ENCODE measurements at regions of chr6 and their contacts with region 1.

Region 1: GRCh38 chr6:126804332-126805064 is 314.0 kb upstream of the RSPO3 start:
- DNase-seq: peak; percentile 5
- H3K4me3 ChIP-seq: no peak overlapping the region
- H3K27ac ChIP-seq: no peak overlapping the region
- H3K4me1 ChIP-seq: no peaks in the 10 kb centered on the region
- H3K27me3 ChIP-seq: no peaks in the 10 kb centered on the region
- CTCF ChIP-seq: peak in 3 of 4 experiments; percentile 55 to 68 (median 65)
- POLR2A ChIP-seq: no peak

Region 2: GRCh38 chr6:126914801-126915200 is 110.3 kb after region 1 on chr6:
- intact Hi-C with region 1: no loop called
- DNase-seq: no peak
- H3K4me3 ChIP-seq: no peak overlapping the region
- H3K27ac ChIP-seq: no peak overlapping the region
- H3K4me1 ChIP-seq: no peaks in the 10 kb centered on the region
- H3K27me3 ChIP-seq: no peaks in the 10 kb centered on the region
- CTCF ChIP-seq: no peak
- POLR2A ChIP-seq: no peak

Region 3: GRCh38 chr6:127190552-127190951 is 386.1 kb after region 1 on chr6:
- intact Hi-C with region 1: loop called (anchors 5 kb)
- DNase-seq: no peak
- H3K4me3 ChIP-seq: no peak overlapping the region
- H3K27ac ChIP-seq: no peak overlapping the region
- H3K4me1 ChIP-seq: no peaks in the 10 kb centered on the region
- H3K27me3 ChIP-seq: no peaks in the 10 kb centered on the region
- CTCF ChIP-seq: peak in 2 of 4 experiments; percentile 11 to 13
- POLR2A ChIP-seq: no peak

Region 4: DNA sequence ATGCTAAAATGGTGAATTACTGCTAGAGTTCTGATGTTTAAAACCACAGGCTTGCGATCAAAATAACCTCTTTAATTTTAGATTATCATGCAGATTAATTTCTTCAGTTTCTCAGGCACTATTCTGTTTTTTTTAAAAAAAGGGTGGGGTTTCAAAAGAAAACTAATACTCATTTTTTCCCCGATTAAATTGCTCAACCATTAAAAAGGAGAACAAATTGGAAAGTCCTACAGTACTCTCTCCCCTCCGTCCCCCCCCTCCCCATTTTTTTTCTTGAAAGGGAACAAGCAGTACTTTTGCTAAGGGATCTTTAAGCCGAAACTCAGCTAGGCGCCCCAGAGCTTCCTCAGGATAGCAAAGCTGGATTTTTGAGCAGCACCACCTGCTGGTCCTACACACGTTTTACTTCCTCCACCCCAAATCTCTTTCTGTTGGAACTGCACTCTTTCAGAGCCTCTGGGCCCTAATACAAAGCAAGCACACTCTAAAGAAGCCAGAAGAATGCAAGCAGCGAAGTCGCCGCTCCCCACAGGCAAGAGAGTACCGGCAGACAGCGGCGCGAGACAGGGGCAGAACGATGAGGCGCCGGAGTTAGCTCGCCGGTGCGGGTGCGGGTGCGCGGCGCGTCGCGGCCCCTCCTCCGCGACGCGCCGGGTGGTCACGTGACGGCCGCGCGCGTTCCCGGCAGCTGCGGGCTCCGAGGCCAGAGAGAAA is 461.8 kb after region 1 on chr6 and contains the start of gene RNF146:
- intact Hi-C with region 1: loop called (anchors 10 kb)
- DNase-seq: peak; percentile 76
- H3K4me3 ChIP-seq: peak within 1 kb of the TSS; percentile 84 to 96
- H3K27ac ChIP-seq: peak within 1 kb of the TSS; percentile 98 to 99
- H3K4me1 ChIP-seq: no peaks in the 10 kb centered on the region
- H3K27me3 ChIP-seq: no peaks in the 10 kb centered on the region
- CTCF ChIP-seq: peak; percentile 27 to 81 (median 78)
- POLR2A ChIP-seq: no peak
- total RNA-seq, gene RNF146: 30.5 to 55.8 TPM